GM10248 (cell line): ENCODE measurements at regions of chr2 and their contacts with region 1.

Region 1: DNA sequence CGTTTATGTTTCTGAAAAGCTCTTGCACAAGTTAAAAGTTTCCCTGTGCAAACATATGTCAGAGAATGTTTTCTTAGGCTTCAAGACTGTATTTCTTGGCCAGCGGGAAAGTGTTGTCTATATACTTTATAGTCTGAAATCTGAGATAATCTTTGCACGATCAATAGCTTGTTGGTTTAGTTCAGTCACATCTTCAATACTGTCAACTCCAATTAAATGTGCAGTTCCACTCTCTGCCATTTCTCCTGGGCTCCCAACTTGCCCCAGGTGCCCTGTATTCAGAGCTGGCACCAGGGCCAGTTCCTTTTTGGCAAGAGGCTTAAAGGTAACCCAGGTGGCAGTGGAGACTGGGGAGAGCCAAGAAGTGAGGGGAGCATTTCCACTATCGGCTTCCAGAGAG is 64.4 kb downstream of the ACOXL start:
- DNase-seq: no peak
- CTCF ChIP-seq: no peak

Region 2: DNA sequence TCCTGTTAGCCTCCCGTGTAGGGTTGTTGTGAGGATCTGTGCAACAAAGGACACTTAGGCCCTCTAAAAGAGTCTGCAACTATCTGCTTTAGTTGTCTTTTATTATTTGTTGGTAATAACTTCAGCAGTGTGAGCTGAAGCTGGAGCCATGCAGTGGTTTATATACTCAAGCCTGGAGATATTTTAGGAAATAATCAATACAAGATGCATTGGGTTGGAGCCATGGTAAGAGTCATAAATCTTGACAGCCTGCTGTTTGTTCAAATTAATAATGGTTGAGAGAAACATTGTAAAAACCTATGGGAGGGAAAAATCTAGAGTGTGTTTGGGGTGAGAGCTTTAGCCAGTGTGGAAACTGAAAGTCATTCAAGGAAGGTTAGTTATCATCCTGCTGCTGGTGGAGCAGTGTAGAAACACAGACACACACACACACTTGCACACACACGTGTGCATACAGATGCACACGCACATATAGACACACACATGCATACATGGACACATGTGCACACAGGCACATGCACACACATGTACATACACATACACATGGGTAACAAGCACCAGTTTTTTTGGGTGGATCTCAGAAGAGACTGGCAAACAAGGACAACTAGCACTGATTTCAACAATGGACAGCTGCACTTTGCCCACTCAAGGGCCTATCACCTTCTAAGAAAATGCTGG is 13.5 kb before region 1 on chr2:
- CTCF ChIA-PET with region 1: interaction called, 11 read pairs
- POLR2A ChIA-PET with region 1: no interaction called
- DNase-seq: no peak
- CTCF ChIP-seq: no peak